ENCODE measurements at regions of chr16 and their contacts with region 1.

Region 1: GRCh38 chr16:28924732-28925385 is at the start of gene RABEP2:
- DNase-seq: peak; percentile 95
- H3K4me3 ChIP-seq: peak within 1 kb of the TSS; percentile 77
- H3K27ac ChIP-seq: peak within 1 kb of the TSS; percentile 100
- H3K4me1 ChIP-seq: peaks cover 69% of the 10 kb centered on the region
- CTCF ChIP-seq: no peak
- total RNA-seq, gene RABEP2: 84.8 and 118 TPM in 2 replicates

Region 2: GRCh38 chr16:28609631-28610594 is 314.9 kb before region 1 on chr16 and contains the start of gene SULT1A1:
- CTCF ChIA-PET with region 1: no interaction called
- POLR2A ChIA-PET with region 1: no interaction called
- intact Hi-C with region 1: no loop called
- DNase-seq: no peak
- H3K4me3 ChIP-seq: no peak within 1 kb of the TSS
- H3K27ac ChIP-seq: no peak within 1 kb of the TSS
- H3K4me1 ChIP-seq: peaks cover 4% of the 10 kb centered on the region
- CTCF ChIP-seq: no peak
- total RNA-seq, gene SULT1A1: 36.1 and 41.0 TPM in 2 replicates

Region 3: GRCh38 chr16:28863929-28864793 is 60.7 kb before region 1 on chr16:
- CTCF ChIA-PET with region 1: no interaction called
- POLR2A ChIA-PET with region 1: interaction called, 12 read pairs
- intact Hi-C with region 1: no loop called
- DNase-seq: no peak
- H3K4me3 ChIP-seq: peak overlapping the region; percentile 97
- H3K27ac ChIP-seq: peak overlapping the region; percentile 81
- H3K4me1 ChIP-seq: peaks cover 19% of the 10 kb centered on the region
- CTCF ChIP-seq: no peak

Region 4: GRCh38 chr16:28910086-28911031 is 14.5 kb before region 1 on chr16:
- CTCF ChIA-PET with region 1: interaction called, 15 read pairs
- POLR2A ChIA-PET with region 1: interaction called, 9 read pairs
- intact Hi-C with region 1: loop called (anchors 2 kb)
- DNase-seq: peak; percentile 71
- H3K4me3 ChIP-seq: peak overlapping the region; percentile 4
- H3K27ac ChIP-seq: peak overlapping the region; percentile 79
- H3K4me1 ChIP-seq: peaks cover 28% of the 10 kb centered on the region
- CTCF ChIP-seq: no peak

Region 5: DNA sequence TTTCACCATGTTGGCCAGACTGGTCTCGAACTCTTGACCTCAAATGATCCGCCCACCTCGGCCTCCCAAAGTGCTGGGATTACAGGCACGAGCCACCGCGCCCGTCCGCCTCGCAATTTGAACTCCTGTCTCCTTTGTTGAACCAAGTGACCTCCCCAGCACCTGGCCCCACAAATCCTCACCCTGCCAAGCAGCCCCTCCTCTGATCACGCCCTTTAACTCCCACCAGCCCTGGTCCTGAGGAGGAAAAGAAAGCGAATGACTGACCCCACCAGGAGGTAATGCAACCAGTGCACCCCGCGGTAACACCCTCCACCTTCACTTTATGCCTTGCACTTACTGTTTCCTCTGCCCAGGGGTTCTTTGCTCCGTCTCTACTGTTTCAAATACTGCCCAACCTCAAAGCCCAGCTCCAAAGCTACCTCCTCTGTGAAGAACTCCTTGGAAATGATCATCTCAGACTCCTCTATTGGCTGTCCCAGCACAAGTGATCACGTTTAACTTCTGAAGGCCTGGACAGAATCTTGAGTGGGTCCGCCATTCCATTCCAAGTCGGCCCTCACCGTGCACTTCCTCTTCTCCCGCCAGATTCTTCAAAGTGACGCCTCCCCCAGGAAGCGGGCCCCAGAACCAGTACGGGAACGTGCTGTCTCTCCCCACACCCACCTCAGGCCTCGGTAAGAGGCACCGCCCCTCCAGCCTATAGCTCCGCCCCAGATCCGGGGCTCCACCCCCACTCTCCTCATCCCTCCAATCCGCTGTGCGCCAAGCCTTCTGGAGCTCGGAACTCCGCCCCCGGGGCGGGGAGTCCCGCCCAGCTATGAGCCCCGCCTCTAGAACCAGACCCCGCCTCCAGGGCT is 11.3 kb after region 1 on chr16:
- CTCF ChIA-PET with region 1: interaction called, 8 read pairs
- POLR2A ChIA-PET with region 1: interaction called, 37 read pairs
- intact Hi-C with region 1: loop called (anchors 1 kb)
- DNase-seq: peak; percentile 94
- H3K4me3 ChIP-seq: peak overlapping the region; percentile 28
- H3K27ac ChIP-seq: peak overlapping the region; percentile 37
- H3K4me1 ChIP-seq: peaks cover 44% of the 10 kb centered on the region
- CTCF ChIP-seq: peak; percentile 31; the same call in 1 of the 2 replicates

Region 6: DNA sequence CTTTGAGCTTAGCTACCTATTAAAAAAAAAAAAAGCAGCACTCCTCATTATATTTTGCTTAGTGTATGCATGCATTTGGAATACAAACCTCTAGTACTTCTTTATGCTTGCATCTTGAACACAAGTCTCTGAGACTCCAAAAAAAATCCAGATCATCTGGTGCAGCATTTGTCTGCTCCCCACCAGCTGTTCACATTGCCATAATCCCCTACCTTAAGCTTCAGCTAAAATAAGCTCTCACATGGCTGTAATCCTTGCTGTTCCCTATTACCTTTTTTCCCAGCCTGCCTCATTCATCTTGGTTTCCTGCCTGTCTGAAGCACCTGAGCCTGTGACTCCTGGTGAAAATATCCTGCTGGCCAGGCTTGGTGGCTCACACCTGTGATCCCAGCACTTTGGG is 18.4 kb after region 1 on chr16:
- CTCF ChIA-PET with region 1: interaction called, 18 read pairs
- POLR2A ChIA-PET with region 1: interaction called, 22 read pairs
- intact Hi-C with region 1: loop called (anchors 2 kb)
- DNase-seq: no peak
- H3K4me3 ChIP-seq: no peak overlapping the region
- H3K27ac ChIP-seq: no peak overlapping the region
- H3K4me1 ChIP-seq: peaks cover 22% of the 10 kb centered on the region
- CTCF ChIP-seq: no peak

Region 7: GRCh38 chr16:28990375-28991040 is 65.6 kb after region 1 on chr16:
- CTCF ChIA-PET with region 1: no interaction called
- POLR2A ChIA-PET with region 1: no interaction called
- intact Hi-C with region 1: no loop called
- DNase-seq: no peak
- H3K4me3 ChIP-seq: no peak overlapping the region
- H3K27ac ChIP-seq: no peak overlapping the region
- H3K4me1 ChIP-seq: peaks cover 5% of the 10 kb centered on the region
- CTCF ChIP-seq: no peak

Measured in OCI-LY7 (cell line).